Activated T-helper 1 cell treated with anti-CD3 and anti-CD28 coated beads, Interleukin-12 subunit alpha, Interleukin-12 subunit beta, Interleukin-2, Interleukin-4 antibody, amounts not matched to agents 30 ng/mL and 10 ng/mL and 1 ng/mL, durations not matched to agents 14 hours and 24 hours and 36 hours (primary cell): ENCODE measurements at regions of chr16 and their contacts with region 1.

Region 1: GRCh38 chr16:4271176-4272066 is 1.4 kb downstream of the TFAP4 start:
- DNase-seq: peak; percentile 85
- H3K4me3 Mint-ChIP-seq: peak overlapping the region; percentile 88
- H3K27ac Mint-ChIP-seq: peak overlapping the region; percentile 94
- H3K4me1 Mint-ChIP-seq: peaks cover 7% of the 10 kb centered on the region
- H3K27me3 Mint-ChIP-seq: peaks cover 2% of the 10 kb centered on the region

Region 2: DNA sequence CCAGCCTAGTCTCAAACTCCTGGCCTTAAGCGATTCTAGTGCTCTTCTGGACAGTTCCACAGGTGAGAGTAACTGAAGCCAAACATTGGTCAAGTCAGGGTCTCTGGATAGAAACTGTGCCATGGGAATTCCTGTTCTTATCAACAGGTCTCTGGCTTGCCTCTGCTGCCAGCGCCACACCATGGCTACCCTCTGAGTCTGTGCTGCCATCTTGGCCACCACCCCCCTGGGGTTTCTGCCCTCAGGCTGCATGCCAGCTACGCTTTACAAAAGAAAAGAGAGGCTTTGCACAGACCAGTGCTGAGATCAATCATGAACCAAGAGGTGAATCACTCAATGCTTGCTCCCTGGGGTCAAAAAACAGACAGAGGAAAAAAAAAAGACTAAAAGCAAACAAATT is 366.5 kb before region 1 on chr16:
- intact Hi-C with region 1: no loop called
- DNase-seq: no peak
- H3K4me3 Mint-ChIP-seq: no peak overlapping the region
- H3K27ac Mint-ChIP-seq: no peak overlapping the region
- H3K4me1 Mint-ChIP-seq: no peaks in the 10 kb centered on the region
- H3K27me3 Mint-ChIP-seq: peaks cover 5% of the 10 kb centered on the region

Region 3: GRCh38 chr16:4183237-4184036 is 88.0 kb before region 1 on chr16:
- intact Hi-C with region 1: loop called (anchors 1 kb)
- DNase-seq: peak; percentile 92
- H3K4me3 Mint-ChIP-seq: peak overlapping the region; percentile 80
- H3K27ac Mint-ChIP-seq: peak overlapping the region; percentile 80
- H3K4me1 Mint-ChIP-seq: peaks cover 5% of the 10 kb centered on the region
- H3K27me3 Mint-ChIP-seq: peaks cover 12% of the 10 kb centered on the region

Region 4: DNA sequence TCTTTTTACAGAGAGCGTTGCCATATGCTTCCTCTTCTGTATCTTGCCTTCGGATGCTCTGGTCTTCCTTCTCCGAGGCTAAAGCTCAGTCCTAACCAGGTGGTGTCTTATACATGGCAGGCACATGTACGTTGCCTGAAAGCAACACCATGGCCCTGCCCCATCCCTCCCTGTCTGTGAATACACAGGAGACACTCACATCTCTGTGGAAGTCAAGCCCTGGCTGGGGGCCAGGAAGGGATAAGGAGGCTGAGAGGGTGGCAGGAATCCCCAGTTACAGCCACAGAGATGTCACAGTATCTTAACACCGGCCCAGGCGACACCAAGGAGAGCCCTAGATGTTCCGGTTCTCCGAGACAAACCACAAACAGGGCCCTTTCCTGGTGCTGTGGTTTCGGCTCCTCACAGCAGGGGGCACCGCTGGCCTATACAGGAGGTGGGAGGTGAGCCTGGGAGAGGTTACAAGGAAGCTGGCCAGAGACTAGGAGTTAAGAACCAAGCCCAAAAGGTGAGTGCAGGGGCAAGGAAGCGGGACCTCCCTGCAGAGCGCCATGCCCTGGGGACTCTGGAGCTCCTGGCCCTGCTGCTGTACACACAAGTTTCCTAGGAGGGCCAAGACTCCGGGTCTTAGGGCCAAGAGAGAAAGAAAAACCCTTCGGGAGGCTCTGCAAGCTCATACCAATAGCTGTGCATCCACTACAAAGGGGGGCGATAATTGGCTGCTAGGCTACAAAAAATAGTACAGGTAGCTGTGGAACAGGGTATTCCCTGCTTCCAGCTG is 71.2 kb before region 1 on chr16:
- intact Hi-C with region 1: no loop called
- DNase-seq: no peak
- H3K4me3 Mint-ChIP-seq: no peak overlapping the region
- H3K27ac Mint-ChIP-seq: no peak overlapping the region
- H3K4me1 Mint-ChIP-seq: peaks cover 5% of the 10 kb centered on the region
- H3K27me3 Mint-ChIP-seq: peaks cover 14% of the 10 kb centered on the region

Region 5: GRCh38 chr16:4350787-4351659 is 79.6 kb after region 1 on chr16 and contains the start of gene PAM16:
- intact Hi-C with region 1: loop called (anchors 1 kb)
- DNase-seq: peak; percentile 99
- H3K4me3 Mint-ChIP-seq: peak within 1 kb of the TSS; percentile 97
- H3K27ac Mint-ChIP-seq: peak within 1 kb of the TSS; percentile 93
- H3K4me1 Mint-ChIP-seq: peaks cover 13% of the 10 kb centered on the region
- H3K27me3 Mint-ChIP-seq: no peaks in the 10 kb centered on the region
- total RNA-seq, gene PAM16: 91.5 and 106 TPM in 2 replicates

Region 6: DNA sequence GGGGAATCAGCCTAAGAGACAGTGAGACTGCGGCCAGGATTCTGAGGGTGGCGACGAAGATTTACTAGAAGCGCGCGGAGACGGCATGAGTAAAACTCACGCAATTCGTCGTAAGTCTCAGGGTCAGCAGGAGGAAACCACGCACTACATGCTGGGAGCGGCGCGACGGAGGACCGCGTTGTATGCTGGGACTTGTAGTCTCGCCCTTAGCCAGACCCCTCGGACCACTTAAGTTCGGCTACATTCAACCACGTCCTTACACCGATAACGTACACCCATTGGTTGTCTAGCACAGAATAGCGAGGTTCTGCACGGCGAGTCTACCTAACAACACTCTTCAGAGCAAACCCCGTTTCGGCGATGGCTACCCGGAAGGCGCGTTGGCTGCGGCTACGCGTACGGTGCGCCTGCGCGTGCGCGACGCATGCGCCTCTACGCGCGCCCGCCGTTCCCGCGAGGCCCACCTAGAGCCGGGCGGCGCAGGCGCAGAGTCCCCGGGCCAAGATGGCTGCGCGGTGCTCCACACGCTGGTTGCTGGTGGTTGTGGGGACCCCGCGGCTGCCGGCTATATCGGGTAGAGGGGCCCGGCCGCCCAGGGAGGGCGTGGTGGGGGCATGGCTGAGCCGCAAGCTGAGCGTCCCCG is 154.1 kb after region 1 on chr16 and contains the start of gene DNAJA3:
- intact Hi-C with region 1: loop called (anchors 1 kb)
- DNase-seq: peak; percentile 91
- H3K4me3 Mint-ChIP-seq: peak within 1 kb of the TSS; percentile 98
- H3K27ac Mint-ChIP-seq: peak within 1 kb of the TSS; percentile 100
- H3K4me1 Mint-ChIP-seq: peaks cover 31% of the 10 kb centered on the region
- H3K27me3 Mint-ChIP-seq: peaks cover 3% of the 10 kb centered on the region
- total RNA-seq, gene DNAJA3: 103 and 107 TPM in 2 replicates

Region 7: GRCh38 chr16:4693296-4693955 is 422.0 kb after region 1 on chr16 and contains the start of gene NUDT16L1:
- intact Hi-C with region 1: loop called (anchors 5 kb)
- DNase-seq: peak; percentile 98
- H3K4me3 Mint-ChIP-seq: peak within 1 kb of the TSS; percentile 86
- H3K27ac Mint-ChIP-seq: peak within 1 kb of the TSS; percentile 84
- H3K4me1 Mint-ChIP-seq: no peaks in the 10 kb centered on the region
- H3K27me3 Mint-ChIP-seq: no peaks in the 10 kb centered on the region
- total RNA-seq, gene NUDT16L1: 39.9 and 41.9 TPM in 2 replicates